ENCODE measurements at regions of chr10 and their contacts with region 1.

Region 1: GRCh38 chr10:51699475-51700227 is at the start of gene CSTF2T:
- DNase-seq: peak; percentile 84 to 91
- ATAC-seq: peak; percentile 92 to 95 (median 94)
- H3K4me3 ChIP-seq: peak within 1 kb of the TSS; percentile 94
- H3K27ac ChIP-seq: peak within 1 kb of the TSS; percentile 98
- H3K4me1 ChIP-seq: peaks cover 39% of the 10 kb centered on the region
- H3K27me3 ChIP-seq: no peaks in the 10 kb centered on the region
- CTCF ChIP-seq: no peak
- total RNA-seq, gene CSTF2T: 20.1 to 34.5 (median 21.8) TPM

Region 2: GRCh38 chr10:51857305-51857704 is 157.7 kb after region 1 on chr10:
- intact Hi-C with region 1: loop called in 1 of 2 experiments (anchors 5 kb)
- DNase-seq: no peak
- ATAC-seq: no peak
- H3K4me3 ChIP-seq: no peak overlapping the region
- H3K27ac ChIP-seq: no peak overlapping the region
- H3K4me1 ChIP-seq: peaks cover 32% of the 10 kb centered on the region
- H3K27me3 ChIP-seq: no peaks in the 10 kb centered on the region
- CTCF ChIP-seq: no peak

Region 3: DNA sequence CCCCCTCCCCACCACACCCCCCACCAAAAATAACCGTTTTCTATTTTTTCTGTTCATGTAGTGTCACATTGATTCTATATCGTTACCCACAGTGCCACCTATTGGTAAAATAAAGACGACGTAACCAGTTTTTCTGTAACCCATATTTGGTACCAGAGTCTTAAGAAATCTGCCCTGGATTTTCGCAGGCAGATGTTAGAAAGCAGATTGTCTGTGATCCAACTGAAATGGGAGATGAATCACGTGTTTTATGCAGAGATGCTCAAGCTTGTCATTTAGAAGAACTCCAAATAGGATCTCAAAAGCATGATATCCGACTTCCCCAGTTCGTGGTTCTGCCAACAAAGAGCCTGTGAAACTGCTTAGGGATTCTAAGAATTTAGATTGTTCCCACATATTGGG is 260.8 kb after region 1 on chr10:
- intact Hi-C with region 1: loop called in 1 of 2 experiments (anchors 5 kb)
- DNase-seq: no peak
- ATAC-seq: peak; percentile 65 to 87 (median 76)
- H3K4me3 ChIP-seq: no peak overlapping the region
- H3K27ac ChIP-seq: no peak overlapping the region
- H3K4me1 ChIP-seq: peaks cover 4% of the 10 kb centered on the region
- H3K27me3 ChIP-seq: no peaks in the 10 kb centered on the region
- CTCF ChIP-seq: peak; percentile 57

Measured in psoas muscle (tissue), 8 donors.